Activated CD8-positive, alpha-beta memory T cell treated with anti-CD3 and anti-CD28 coated beads, Interleukin-2, amount 10 ng/mL, durations not matched to agents 7 days and 5 days (primary cell): ENCODE measurements at regions of chr1 and their contacts with region 1.

Region 1: DNA sequence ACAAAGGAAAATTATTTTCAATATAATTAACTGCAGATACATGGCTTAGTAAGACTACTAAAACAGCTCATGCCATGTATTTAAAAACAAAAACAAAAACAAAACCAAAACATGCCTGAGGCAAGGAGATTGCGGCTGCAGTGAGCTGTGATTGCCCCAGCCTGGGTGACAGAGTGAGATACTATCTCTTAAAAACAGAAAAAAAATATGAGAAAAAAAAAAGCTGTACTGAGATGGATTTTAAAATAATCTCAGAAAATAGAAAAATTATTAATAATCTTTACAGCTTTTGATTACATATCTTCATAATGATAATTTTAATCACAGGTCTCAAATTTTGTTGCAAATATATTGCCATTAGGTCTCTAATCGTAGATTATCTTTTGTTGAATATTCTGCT is 24.0 kb upstream of the LIN9 start:
- DNase-seq: no peak
- ATAC-seq: no peak
- H3K4me3 Mint-ChIP-seq: peak overlapping the region; percentile 59
- H3K27ac Mint-ChIP-seq: peak overlapping the region; percentile 29
- H3K4me1 Mint-ChIP-seq: peaks cover 20% of the 10 kb centered on the region
- H3K27me3 Mint-ChIP-seq: peaks cover 3% of the 10 kb centered on the region

Region 2: DNA sequence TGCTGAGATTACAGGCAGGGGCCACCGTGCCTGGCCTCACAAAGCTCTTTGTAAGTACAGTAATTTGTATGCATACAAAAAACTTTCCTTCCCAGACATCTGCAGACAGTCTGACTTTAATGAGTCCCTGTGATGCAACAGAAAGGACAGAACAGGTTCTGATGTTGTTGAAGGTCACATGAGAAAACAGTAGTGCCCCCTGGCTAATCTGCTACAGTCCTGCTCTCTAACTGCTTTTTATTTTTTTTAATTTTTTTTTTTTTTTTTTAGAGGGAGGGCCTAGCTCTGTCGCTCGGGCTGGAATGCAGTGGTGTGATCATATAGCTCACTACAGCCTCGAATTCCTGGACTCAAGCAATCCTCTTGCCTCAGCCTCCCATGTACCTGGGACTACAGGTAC is 183.1 kb before region 1 on chr1:
- CTCF ChIA-PET with region 1: interaction called, 11 read pairs
- DNase-seq: no peak
- ATAC-seq: no peak
- H3K4me3 Mint-ChIP-seq: no peak overlapping the region
- H3K27ac Mint-ChIP-seq: no peak overlapping the region
- H3K4me1 Mint-ChIP-seq: peaks cover 4% of the 10 kb centered on the region
- H3K27me3 Mint-ChIP-seq: no peaks in the 10 kb centered on the region

Region 3: DNA sequence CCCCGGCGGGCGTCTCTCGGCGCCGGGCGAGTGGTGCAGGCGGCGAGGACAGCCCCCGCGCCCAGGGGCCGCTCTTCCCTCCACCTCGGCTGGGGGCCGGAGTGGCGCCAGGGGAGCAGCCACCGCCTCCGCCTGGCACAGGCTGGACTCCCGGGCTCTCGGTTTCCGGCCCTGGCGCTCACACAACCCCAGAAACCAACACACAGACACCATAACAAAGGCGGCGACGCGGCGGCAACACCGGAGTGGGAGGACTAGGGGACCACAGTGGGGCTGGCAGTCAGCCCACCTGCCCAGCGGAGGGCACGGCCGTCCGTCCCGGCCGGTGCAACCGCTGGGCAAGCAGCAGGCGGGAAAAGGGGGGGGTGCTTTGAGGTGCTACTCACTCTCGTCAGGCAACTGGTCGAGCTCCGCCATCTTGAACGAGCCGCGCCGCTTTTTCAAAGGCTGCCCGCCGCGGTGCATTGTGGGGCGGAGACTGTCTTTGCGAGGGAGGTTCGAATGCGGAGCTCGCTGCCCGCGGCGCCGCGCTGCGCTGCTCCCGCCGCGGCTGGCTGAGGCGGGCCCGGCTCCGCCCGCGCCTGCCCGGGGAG is 24.1 kb before region 1 on chr1 and contains the start of gene LIN9:
- CTCF ChIA-PET with region 1: interaction called, 37 read pairs
- DNase-seq: peak; percentile 96
- ATAC-seq: peak; percentile 87
- H3K4me3 Mint-ChIP-seq: peak within 1 kb of the TSS; percentile 88
- H3K27ac Mint-ChIP-seq: peak within 1 kb of the TSS; percentile 88
- H3K4me1 Mint-ChIP-seq: peaks cover 27% of the 10 kb centered on the region
- H3K27me3 Mint-ChIP-seq: peaks cover 21% of the 10 kb centered on the region
- total RNA-seq, gene LIN9: 10.8 to 14.3 TPM

Region 4: DNA sequence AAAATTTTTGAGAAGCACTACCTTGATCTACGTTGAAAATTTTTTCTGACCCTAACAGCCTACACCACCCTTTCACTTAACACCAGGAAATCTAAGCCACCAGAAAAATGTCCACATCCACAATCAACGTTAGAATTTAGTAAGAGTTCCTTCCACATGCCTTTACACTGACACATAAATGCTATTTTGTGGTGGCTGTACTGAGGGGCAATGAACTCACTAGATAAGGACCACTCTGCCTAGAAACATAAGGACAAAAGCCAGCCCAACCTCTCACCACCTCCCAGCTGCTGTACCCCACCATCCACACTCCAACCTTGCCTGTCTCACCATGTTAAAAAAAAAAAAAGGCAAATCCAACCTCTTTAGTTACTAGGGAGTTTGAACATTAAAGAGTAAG is 45.1 kb after region 1 on chr1:
- CTCF ChIA-PET with region 1: no interaction called
- DNase-seq: no peak
- ATAC-seq: no peak
- H3K4me3 Mint-ChIP-seq: no peak overlapping the region
- H3K27ac Mint-ChIP-seq: no peak overlapping the region
- H3K4me1 Mint-ChIP-seq: peaks cover 11% of the 10 kb centered on the region
- H3K27me3 Mint-ChIP-seq: no peaks in the 10 kb centered on the region